CD8-positive, alpha-beta T cell (primary cell): ENCODE measurements at regions of chr21 and their contacts with region 1.

Region 1: GRCh38 chr21:25421327-25422028 is 185.8 kb downstream of the MRPL39 start:
- DNase-seq: peak in 7 of 9 experiments; percentile 13 to 83 (median 53)
- ATAC-seq: peak; percentile 92
- H3K4me3 ChIP-seq: no peak overlapping the region
- H3K4me3 Mint-ChIP-seq: peak overlapping the region; percentile 40
- H3K27ac ChIP-seq: peak overlapping the region in 1 of 2 experiments; percentile 64
- H3K27ac Mint-ChIP-seq: peak overlapping the region; percentile 49
- H3K4me1 ChIP-seq: peaks cover 5% of the 10 kb centered on the region
- H3K4me1 Mint-ChIP-seq: peaks cover 12% of the 10 kb centered on the region
- H3K27me3 ChIP-seq: no peaks in the 10 kb centered on the region
- H3K27me3 Mint-ChIP-seq: peaks cover 4% of the 10 kb centered on the region
- CTCF ChIP-seq: peak; percentile 60

Region 2: GRCh38 chr21:24870633-24871032 is 550.8 kb before region 1 on chr21:
- CTCF ChIA-PET with region 1: no interaction called
- POLR2A ChIA-PET with region 1: no interaction called
- intact Hi-C with region 1: no loop called
- DNase-seq: no peak
- ATAC-seq: no peak
- H3K4me3 ChIP-seq: no peak overlapping the region
- H3K4me3 Mint-ChIP-seq: no peak overlapping the region
- H3K27ac ChIP-seq: no peak overlapping the region
- H3K27ac Mint-ChIP-seq: no peak overlapping the region
- H3K4me1 ChIP-seq: no peaks in the 10 kb centered on the region
- H3K4me1 Mint-ChIP-seq: no peaks in the 10 kb centered on the region
- H3K27me3 ChIP-seq: no peaks in the 10 kb centered on the region
- H3K27me3 Mint-ChIP-seq: no peaks in the 10 kb centered on the region
- CTCF ChIP-seq: no peak

Region 3: DNA sequence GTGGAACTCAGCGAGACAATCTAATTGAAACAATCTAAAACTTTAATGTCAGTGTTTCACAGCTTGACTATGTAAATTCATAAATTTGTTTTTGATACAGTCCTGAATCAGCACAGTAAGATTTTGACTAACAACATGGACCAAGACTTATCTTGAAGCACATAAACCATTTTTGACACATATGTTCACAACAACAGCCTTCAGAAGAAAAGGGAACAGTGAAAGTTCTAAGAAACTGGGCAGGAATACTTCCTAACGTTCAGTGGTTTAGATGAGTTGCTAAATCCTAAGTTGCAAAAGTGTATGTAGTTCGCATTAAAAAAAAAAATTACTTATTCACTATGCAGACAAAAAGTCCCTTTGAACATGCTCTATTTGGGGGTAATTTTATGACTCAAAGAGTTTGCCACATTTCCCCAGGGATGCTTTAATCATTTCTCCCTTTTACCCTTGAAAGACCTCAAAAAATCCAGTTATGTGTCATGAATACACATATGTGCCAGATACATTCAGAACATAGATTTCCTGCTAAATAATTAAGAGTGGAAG is 65.6 kb after region 1 on chr21:
- CTCF ChIA-PET with region 1: no interaction called
- POLR2A ChIA-PET with region 1: no interaction called
- intact Hi-C with region 1: loop called in 1 of 2 experiments (anchors 10 kb)
- DNase-seq: peak in 1 of 9 experiments; percentile 5
- ATAC-seq: no peak
- H3K4me3 ChIP-seq: no peak overlapping the region
- H3K4me3 Mint-ChIP-seq: no peak overlapping the region
- H3K27ac ChIP-seq: no peak overlapping the region
- H3K27ac Mint-ChIP-seq: no peak overlapping the region
- H3K4me1 ChIP-seq: no peaks in the 10 kb centered on the region
- H3K4me1 Mint-ChIP-seq: peaks cover 5% of the 10 kb centered on the region
- H3K27me3 ChIP-seq: no peaks in the 10 kb centered on the region
- H3K27me3 Mint-ChIP-seq: no peaks in the 10 kb centered on the region
- CTCF ChIP-seq: no peak

Region 4: DNA sequence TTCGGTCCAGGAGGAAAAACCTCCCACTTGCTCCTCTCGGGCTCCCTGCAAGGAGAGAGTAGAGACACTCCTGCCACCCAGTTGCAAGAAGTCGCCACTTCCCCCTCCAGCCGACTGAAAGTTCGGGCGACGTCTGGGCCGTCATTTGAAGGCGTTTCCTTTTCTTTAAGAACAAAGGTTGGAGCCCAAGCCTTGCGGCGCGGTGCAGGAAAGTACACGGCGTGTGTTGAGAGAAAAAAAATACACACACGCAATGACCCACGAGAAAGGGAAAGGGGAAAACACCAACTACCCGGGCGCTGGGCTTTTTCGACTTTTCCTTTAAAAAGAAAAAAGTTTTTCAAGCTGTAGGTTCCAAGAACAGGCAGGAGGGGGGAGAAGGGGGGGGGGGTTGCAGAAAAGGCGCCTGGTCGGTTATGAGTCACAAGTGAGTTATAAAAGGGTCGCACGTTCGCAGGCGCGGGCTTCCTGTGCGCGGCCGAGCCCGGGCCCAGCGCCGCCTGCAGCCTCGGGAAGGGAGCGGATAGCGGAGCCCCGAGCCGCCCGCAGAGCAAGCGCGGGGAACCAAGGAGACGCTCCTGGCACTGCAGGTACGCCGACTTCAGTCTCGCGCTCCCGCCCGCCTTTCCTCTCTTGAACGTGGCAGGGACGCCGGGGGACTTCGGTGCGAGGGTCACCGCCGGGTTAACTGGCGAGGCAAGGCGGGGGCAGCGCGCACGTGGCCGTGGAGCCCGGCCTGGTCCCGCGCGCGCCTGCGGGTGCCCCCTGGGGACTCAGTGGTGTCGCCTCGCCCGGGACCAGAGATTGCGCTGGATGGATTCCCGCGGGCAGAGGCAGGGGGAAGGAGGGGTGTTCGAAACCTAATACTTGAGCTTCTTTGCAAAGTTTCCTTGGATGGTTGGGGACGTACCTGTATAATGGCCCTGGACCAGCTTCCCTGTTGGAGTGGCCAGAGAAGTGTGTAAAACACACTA is 140.5 kb after region 1 on chr21:
- CTCF ChIA-PET with region 1: no interaction called
- POLR2A ChIA-PET with region 1: no interaction called
- intact Hi-C with region 1: loop called in 1 of 2 experiments (anchors 2 kb)
- DNase-seq: peak in 8 of 9 experiments; percentile 45 to 84 (median 66)
- ATAC-seq: peak; percentile 77
- H3K4me3 ChIP-seq: peak overlapping the region; percentile 67 to 80
- H3K4me3 Mint-ChIP-seq: peak overlapping the region; percentile 95
- H3K27ac ChIP-seq: peak overlapping the region; percentile 17 to 69
- H3K27ac Mint-ChIP-seq: peak overlapping the region; percentile 93
- H3K4me1 ChIP-seq: peaks cover 22% of the 10 kb centered on the region
- H3K4me1 Mint-ChIP-seq: peaks cover 52% of the 10 kb centered on the region
- H3K27me3 ChIP-seq: no peaks in the 10 kb centered on the region
- H3K27me3 Mint-ChIP-seq: no peaks in the 10 kb centered on the region
- CTCF ChIP-seq: no peak

Region 5: GRCh38 chr21:25568246-25568645 is 146.8 kb after region 1 on chr21:
- CTCF ChIA-PET with region 1: no interaction called
- POLR2A ChIA-PET with region 1: no interaction called
- intact Hi-C with region 1: loop called in 1 of 2 experiments (anchors 2 kb)
- DNase-seq: peak in 2 of 9 experiments; percentile 36 to 57
- ATAC-seq: no peak
- H3K4me3 ChIP-seq: no peak overlapping the region
- H3K4me3 Mint-ChIP-seq: peak overlapping the region; percentile 55
- H3K27ac ChIP-seq: no peak overlapping the region
- H3K27ac Mint-ChIP-seq: no peak overlapping the region
- H3K4me1 ChIP-seq: peaks cover 17% of the 10 kb centered on the region
- H3K4me1 Mint-ChIP-seq: peaks cover 70% of the 10 kb centered on the region
- H3K27me3 ChIP-seq: no peaks in the 10 kb centered on the region
- H3K27me3 Mint-ChIP-seq: no peaks in the 10 kb centered on the region
- CTCF ChIP-seq: no peak

Region 6: DNA sequence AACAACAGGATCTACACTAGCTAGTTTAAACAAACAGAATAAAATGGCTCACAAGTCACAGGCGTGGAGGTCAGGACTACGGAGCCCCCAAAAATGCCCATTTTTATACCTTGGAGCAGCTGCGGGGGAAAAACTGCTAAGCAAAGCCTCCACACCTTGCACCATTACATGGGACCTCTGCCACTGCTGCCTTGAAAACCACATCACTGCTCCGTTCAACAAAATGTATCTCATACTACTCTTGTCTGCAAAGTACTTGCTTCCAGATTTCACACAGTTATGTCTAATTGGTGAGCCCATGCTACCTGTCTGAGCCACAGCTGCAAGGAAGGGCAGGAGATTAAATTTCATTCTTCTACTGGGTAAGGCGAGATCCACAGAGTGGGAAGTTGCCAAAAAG is 161.4 kb after region 1 on chr21:
- CTCF ChIA-PET with region 1: no interaction called
- POLR2A ChIA-PET with region 1: no interaction called
- intact Hi-C with region 1: loop called in 1 of 2 experiments (anchors 5 kb)
- DNase-seq: no peak
- ATAC-seq: no peak
- H3K4me3 ChIP-seq: no peak overlapping the region
- H3K4me3 Mint-ChIP-seq: no peak overlapping the region
- H3K27ac ChIP-seq: no peak overlapping the region
- H3K27ac Mint-ChIP-seq: peak overlapping the region; percentile 83
- H3K4me1 ChIP-seq: peaks cover 6% of the 10 kb centered on the region
- H3K4me1 Mint-ChIP-seq: peaks cover 31% of the 10 kb centered on the region
- H3K27me3 ChIP-seq: no peaks in the 10 kb centered on the region
- H3K27me3 Mint-ChIP-seq: no peaks in the 10 kb centered on the region
- CTCF ChIP-seq: no peak

Region 7: GRCh38 chr21:25708467-25709065 is 287.1 kb after region 1 on chr21:
- CTCF ChIA-PET with region 1: no interaction called
- POLR2A ChIA-PET with region 1: no interaction called
- intact Hi-C with region 1: loop called (anchors 1 to 2 kb)
- DNase-seq: peak in 8 of 9 experiments; percentile 15 to 71 (median 54)
- ATAC-seq: peak; percentile 68
- H3K4me3 ChIP-seq: no peak overlapping the region
- H3K4me3 Mint-ChIP-seq: no peak overlapping the region
- H3K27ac ChIP-seq: no peak overlapping the region
- H3K27ac Mint-ChIP-seq: no peak overlapping the region
- H3K4me1 ChIP-seq: no peaks in the 10 kb centered on the region
- H3K4me1 Mint-ChIP-seq: no peaks in the 10 kb centered on the region
- H3K27me3 ChIP-seq: no peaks in the 10 kb centered on the region
- H3K27me3 Mint-ChIP-seq: no peaks in the 10 kb centered on the region
- CTCF ChIP-seq: peak; percentile 90